Uterus (tissue), 4 donors: ENCODE measurements at regions of chr6 and their contacts with region 1.

Region 1: DNA sequence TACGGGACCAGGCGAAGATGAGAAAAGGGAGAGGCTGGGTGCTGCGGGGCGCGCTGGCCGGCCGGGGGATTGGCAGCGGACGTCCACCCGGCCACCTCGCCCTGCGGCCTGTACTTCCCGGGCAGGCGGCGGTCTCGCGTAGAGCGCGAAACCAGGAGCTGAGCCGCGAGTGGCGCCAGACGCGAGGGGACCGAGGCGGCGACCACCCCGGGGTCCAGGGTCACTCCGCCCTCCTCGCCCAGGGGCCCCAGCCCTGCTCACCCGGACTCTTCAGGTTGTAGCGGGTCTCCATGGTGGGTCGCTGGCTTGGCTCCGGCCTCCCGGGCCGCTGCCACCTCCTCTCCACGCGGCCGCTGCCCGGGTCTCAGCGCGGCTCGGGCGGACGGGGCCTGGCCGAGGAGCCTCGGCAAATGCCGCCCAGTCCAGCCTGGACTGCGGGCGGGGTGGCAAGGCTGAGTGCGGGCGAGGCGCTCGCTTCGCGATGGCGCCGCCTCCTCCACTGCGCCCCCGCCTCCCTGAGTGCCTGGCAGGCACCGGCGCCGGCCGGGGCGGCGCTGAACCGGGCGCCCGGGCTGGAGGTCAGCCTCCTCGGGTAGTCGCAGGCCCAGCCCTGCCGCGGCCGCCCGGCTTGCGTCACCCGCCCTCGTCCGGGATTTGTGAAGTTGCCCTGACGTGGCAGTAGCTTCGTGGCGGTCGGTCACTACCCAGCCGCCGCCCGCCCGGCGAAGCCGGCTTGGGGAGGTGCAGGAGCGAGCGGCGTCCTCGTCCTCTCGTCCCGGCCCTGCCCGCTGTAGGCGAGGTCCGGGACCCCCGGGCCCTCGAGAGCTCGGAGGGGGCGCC is at the start of gene UBE2J1:
- DNase-seq: peak; percentile 92
- H3K4me3 ChIP-seq: peak within 1 kb of the TSS; percentile 48 to 77
- H3K27ac ChIP-seq: peak within 1 kb of the TSS; percentile 95 to 99
- H3K4me1 ChIP-seq: peaks cover 0 to 5% of the 10 kb centered on the region in 2 donors
- H3K27me3 ChIP-seq: no peaks in the 10 kb centered on the region
- CTCF ChIP-seq: no peak
- POLR2A ChIP-seq: peak; percentile 76 to 96
- total RNA-seq, gene UBE2J1: 13.1 to 55.2 (median 41.0) TPM

Region 2: DNA sequence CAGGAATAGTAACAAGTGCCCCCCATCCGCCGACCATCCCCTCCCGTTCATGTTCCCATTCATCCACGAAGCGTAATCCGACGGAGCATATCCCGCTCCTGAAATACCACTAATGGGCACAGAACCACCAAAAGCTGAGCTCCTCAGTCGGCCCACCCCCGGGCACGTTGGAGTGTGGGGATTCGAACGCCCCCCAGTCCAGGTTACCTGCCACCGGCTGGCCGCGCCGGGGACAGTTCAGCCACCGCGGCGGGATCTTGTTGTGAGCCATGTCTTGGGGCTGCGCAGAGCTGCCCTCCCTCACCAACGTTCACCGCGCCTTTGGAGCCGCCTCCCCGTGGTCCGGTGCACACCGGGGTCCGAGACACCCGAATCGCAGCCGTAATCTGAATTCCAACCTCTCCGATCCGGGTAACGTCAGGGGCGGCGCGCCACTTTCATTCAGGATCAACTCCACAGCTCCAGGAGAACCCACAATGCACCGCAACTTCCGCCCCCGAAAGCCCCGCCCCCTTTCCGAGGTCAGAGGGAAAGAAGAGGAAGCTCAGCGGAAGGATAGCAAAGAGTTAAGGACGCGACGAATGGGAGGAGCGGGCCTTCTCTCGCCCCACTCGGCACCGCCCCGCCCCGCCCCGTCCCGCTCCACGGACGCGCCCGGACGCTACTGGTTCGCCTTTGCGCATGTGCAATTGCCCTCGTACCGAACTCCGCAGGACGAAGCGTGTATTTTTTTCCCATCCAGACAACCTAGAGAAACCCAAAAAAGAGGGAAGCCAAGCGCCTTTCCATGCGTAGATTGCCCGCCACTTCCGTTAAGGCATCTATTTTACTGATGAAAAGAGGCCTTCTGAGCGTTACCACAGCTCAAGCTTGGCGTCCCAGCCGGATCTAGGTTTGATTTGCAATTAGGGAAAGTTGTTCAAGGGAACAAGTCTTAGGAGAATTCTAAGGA is 389.1 kb before region 1 on chr6 and contains the start of gene RNGTT:
- intact Hi-C with region 1: loop called (anchors 10 kb)
- DNase-seq: peak; percentile 99
- H3K4me3 ChIP-seq: peak within 1 kb of the TSS; percentile 70 to 84
- H3K27ac ChIP-seq: peak within 1 kb of the TSS; percentile 83 to 86
- H3K4me1 ChIP-seq: peaks cover 0 to 4% of the 10 kb centered on the region in 2 donors
- H3K27me3 ChIP-seq: no peaks in the 10 kb centered on the region
- CTCF ChIP-seq: peak in 2 of 4 experiments; percentile 9 to 29
- POLR2A ChIP-seq: peak in 1 of 2 donors; percentile 44
- total RNA-seq, gene RNGTT: 7.4 to 45.7 (median 16.1) TPM

Region 3: GRCh38 chr6:89080542-89081422 is 271.7 kb before region 1 on chr6 and contains the start of gene PNRC1:
- intact Hi-C with region 1: loop called (anchors 5 kb)
- DNase-seq: peak; percentile 100
- H3K4me3 ChIP-seq: peak within 1 kb of the TSS; percentile 93 to 100
- H3K27ac ChIP-seq: peak within 1 kb of the TSS; percentile 100
- H3K4me1 ChIP-seq: no peaks in the 10 kb centered on the region
- H3K27me3 ChIP-seq: no peaks in the 10 kb centered on the region
- CTCF ChIP-seq: no peak
- POLR2A ChIP-seq: peak; percentile 100
- total RNA-seq, gene PNRC1: 114 to 340 (median 203) TPM

Region 4: DNA sequence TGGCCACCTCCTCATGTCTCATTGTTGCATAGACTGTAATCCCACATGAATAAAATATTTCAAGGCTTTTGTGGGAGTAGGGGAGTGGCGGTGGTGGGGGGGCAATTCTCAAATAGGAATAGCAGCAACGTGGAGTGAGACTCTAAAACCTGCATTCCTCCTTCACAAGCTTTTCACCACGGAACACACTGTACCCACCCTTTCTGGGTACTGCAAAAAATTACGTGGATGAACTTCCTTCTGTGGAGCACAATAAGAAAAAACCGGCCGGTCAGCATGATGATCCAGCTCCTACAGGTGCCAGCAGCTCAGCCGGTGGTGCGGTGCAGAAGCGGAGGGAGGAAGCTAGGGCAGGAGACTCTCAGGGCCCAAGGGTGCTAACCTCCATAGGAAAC is 60.5 kb after region 1 on chr6:
- intact Hi-C with region 1: no loop called
- DNase-seq: no peak
- H3K4me3 ChIP-seq: peak overlapping the region in 1 of 2 donors; percentile 79
- H3K27ac ChIP-seq: no peak overlapping the region
- H3K4me1 ChIP-seq: no peaks in the 10 kb centered on the region
- H3K27me3 ChIP-seq: no peaks in the 10 kb centered on the region
- CTCF ChIP-seq: no peak
- POLR2A ChIP-seq: no peak